Dorsolateral prefrontal cortex (tissue), 120 donors: ENCODE measurements at regions of chr17 and their contacts with region 1.

Region 1: DNA sequence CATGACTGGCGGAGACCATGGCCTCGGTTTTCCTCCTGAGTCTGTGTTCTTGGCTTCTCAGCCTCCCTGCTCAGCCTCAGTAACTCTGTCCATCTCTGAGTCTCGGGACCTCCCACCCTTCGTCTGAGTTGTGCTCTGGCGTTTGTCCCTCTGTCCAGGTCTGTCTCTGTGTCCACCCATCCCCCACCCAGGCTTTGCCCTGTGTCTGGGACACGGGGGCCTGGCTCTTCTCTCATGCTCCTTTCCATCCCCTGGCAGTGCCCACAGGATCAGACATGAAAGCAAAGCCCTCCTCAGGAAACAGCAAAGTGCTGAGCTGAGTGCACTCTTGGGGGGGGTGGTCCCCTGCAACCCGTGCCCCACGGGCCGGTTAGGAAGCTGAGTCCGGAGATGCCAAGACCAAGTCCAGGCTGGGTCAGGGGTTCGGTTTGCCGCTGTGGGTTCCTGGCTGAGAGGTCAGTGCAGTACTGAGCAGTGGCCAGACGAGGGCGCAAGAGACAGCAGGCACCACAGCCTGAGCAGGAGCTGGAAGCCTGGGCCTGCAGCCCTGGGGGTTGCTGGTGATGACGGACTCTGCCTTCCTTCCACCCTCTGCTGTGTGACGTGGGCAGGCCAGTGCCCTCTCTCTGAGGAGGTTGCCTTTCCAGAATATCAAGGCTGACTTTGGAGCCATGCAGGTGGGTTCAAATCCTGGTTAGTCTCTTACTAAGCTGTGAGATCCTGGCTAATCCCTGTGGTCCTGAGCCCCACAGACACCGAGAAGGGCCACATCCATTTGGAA is 2.5 kb downstream of the P2RX1 start:
- DNase-seq: peak; percentile 74 to 88 (median 84)
- H3K4me3 ChIP-seq: peak overlapping the region in 13 of 59 donors; percentile 6 to 30 (median 14)
- H3K27ac ChIP-seq: peak overlapping the region in 7 of 59 donors; percentile 19 to 66 (median 53)
- H3K27me3 ChIP-seq: no peaks in the 10 kb centered on the region
- CTCF ChIP-seq: peak; percentile 56 to 98 (median 94)

Region 2: DNA sequence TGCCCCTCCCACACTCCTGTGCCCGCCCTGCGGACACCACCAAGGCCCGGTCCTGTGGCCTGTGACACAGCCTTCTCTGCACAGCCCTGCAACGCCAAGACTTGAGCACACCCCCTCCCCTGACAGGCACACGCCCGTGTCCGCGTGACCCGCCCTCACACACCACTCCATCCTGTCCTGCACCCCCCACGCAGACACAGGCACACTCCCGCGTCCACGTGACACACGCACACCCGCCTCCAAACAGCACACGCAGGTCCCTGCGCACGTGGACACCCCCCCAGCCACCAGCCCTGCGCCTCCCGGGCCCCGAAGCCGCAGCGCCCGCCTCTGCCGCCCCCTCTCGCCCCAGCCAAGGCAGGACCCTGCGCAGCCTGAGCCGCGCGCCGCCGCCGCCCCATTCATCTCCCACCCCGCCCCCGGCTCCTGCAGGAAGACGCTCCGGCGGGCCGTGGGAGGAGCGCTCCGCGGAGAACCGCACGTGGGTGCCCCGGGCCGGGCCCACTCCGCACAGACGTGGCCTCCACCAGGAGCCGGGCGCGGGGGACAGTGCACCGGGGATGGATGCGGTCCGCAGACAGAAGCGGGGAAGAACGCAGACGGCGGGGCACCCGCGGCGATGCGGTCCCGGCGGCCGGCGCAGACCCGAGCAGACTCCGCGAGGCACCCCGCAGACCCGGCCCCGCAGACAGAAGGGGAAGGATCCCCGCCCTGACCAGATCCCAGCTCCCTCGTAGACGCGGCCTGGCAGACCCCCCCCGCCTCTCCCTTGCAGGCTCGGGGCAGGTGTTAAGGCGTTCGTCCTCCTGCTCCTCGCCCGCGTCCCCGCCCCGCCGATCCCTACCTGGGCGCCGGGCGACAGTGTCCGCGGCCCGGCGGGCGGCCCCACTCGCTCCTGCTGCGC is 21.4 kb before region 1 on chr17:
- intact Hi-C with region 1: no loop called
- DNase-seq: peak; percentile 38 to 86 (median 78)
- H3K4me3 ChIP-seq: peak overlapping the region; percentile 37 to 88 (median 79)
- H3K27ac ChIP-seq: peak overlapping the region in 52 of 59 donors; percentile 19 to 92 (median 77)
- H3K27me3 ChIP-seq: no peaks in the 10 kb centered on the region
- CTCF ChIP-seq: peak in 1 of 56 donors; percentile 8

Region 3: GRCh38 chr17:4004517-4005295 is 91.0 kb after region 1 on chr17:
- intact Hi-C with region 1: loop called (anchors 5 kb)
- DNase-seq: peak in 2 of 10 donors; percentile 50 to 66
- H3K4me3 ChIP-seq: no peak overlapping the region
- H3K27ac ChIP-seq: peak overlapping the region in 15 of 59 donors; percentile 6 to 68 (median 29)
- H3K27me3 ChIP-seq: no peaks in the 10 kb centered on the region
- CTCF ChIP-seq: peak; percentile 62 to 96 (median 87)